Lower leg skin (tissue), 4 donors: ENCODE measurements at regions of chr20 and their contacts with region 1.

Region 1: GRCh38 chr20:36199345-36200257 is 36.7 kb upstream of the AAR2 start:
- DNase-seq: peak; percentile 80 to 95
- H3K4me3 ChIP-seq: no peak overlapping the region
- CTCF ChIP-seq: peak in 1 of 3 donors; percentile 80
- POLR2A ChIP-seq: no peak

Region 2: DNA sequence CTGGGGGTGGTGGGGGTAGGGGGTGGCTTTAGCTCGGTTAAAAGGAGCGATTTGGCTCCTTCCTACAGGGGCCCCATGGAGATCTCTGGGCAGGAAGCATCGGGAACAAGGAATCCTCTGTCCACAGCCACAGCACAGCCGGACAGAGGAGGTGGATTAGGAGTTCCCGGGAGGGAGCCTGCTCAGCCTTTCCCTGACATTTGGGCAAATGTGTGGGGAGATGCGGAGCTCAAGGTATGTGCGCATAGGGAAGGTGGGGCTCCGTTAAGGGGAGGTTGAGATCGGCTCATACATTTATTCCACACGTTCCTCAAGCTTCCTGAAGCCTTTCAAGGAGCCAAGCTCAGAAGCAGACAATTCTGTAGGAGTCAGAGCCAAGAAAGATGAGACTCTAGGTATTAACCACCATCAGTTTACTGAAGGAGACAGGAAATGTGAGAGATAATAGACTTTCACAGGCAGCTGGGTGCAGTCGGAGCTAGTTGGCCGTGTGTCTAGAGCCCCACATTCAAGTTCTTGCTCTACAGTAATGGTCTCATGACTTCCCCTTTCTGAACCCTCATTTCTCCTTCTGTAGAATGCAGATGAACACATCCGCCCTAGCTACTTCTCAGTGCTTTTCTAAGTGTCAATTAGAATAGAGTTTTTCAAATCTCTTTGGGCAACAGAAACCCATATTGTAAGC is 85.9 kb before region 1 on chr20:
- intact Hi-C with region 1: no loop called
- DNase-seq: no peak
- H3K4me3 ChIP-seq: no peak overlapping the region
- CTCF ChIP-seq: no peak
- POLR2A ChIP-seq: no peak

Region 3: GRCh38 chr20:36145877-36146707 is 53.5 kb before region 1 on chr20:
- intact Hi-C with region 1: loop called (anchors 10 kb)
- DNase-seq: no peak
- H3K4me3 ChIP-seq: no peak overlapping the region
- CTCF ChIP-seq: no peak
- POLR2A ChIP-seq: no peak